CD4-positive, alpha-beta memory T cell (primary cell): ENCODE measurements at regions of chr22 and their contacts with region 1.

Region 1: DNA sequence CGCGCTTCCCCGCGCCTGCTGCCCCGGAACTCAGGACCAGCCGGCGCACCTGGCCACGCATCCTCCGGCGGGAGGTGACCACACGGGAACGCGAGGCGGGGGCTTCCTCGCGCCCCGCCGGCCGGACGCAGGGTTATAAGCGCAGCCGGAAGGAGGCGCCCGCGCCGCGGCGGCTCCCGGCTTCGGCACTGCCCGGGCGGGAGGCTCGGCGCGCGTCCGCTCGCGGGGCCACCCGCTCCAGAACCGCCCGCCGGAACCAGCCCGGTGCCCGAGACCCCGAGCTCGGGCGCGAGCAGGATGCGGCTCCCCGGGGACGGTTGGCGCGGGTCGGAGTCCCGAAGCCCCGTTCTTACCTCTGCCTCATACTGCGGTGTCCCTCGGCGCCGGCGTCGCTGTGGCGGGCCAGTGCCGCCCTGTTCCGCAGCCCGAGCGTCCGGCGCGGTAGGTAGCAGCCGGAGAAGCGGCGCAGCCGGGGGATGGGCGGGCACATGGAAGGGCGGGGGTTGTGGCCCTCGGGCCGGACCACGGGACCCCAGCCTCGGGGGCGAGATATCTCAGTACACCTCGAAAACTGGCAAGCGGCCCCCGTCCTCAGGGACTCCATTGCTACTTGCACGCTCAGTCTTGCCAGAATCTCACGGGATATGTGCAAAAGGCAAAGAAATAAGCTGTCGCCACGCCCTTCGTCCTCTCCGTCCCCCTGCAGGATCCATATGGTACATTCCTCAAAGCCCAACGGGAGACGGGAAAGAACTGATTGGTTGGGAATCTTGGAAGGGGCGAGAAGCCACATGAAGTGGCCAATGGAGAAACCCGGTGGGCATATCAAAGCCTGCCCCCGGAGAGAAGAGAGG is 23.1 kb downstream of the MICAL3 start:
- DNase-seq: peak; percentile 51 to 75 (median 73)
- H3K4me3 ChIP-seq: peak overlapping the region; percentile 53 to 73
- H3K4me3 Mint-ChIP-seq: peak overlapping the region; percentile 92 to 99 (median 96)
- H3K27ac ChIP-seq: peak overlapping the region; percentile 74
- H3K27ac Mint-ChIP-seq: peak overlapping the region; percentile 78 to 98 (median 95)
- H3K4me1 ChIP-seq: peaks cover 47% of the 10 kb centered on the region
- H3K4me1 Mint-ChIP-seq: peaks cover 25 to 58% (median 44%) of the 10 kb centered on the region in 4 donors
- H3K27me3 ChIP-seq: no peaks in the 10 kb centered on the region
- H3K27me3 Mint-ChIP-seq: no peaks in the 10 kb centered on the region

Region 2: DNA sequence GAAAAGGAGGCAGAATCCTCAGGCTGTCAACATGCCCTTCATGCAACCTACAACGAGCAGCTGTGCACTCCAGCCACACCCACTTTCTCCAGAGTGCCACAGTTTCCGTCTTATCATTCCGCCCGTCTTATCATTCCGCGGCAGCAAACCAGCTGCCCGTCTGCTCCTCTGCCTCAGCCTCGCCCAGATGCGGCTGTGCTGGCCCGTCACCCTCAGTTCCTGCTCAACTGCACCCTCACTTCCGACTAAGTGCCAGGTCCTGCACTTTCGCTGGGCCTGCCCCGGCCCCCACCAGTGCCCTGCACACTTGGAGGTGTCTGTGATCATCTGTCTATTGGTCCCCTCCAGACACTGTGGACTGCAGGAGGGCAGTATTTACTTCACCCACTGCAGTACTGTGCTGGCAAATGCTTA is 20.6 kb before region 1 on chr22:
- CTCF ChIA-PET with region 1: interaction called, 3 read pairs
- POLR2A ChIA-PET with region 1: interaction called, 5 read pairs
- intact Hi-C with region 1: loop called (anchors 2 kb)
- DNase-seq: peak; percentile 47 to 63 (median 52)
- H3K4me3 ChIP-seq: peak overlapping the region in 1 of 2 donors; percentile 13
- H3K4me3 Mint-ChIP-seq: peak overlapping the region; percentile 63 to 89 (median 78)
- H3K27ac ChIP-seq: peak overlapping the region; percentile 17
- H3K27ac Mint-ChIP-seq: peak overlapping the region; percentile 70 to 94 (median 88)
- H3K4me1 ChIP-seq: peaks cover 27% of the 10 kb centered on the region
- H3K4me1 Mint-ChIP-seq: peaks cover 22 to 47% (median 33%) of the 10 kb centered on the region in 4 donors
- H3K27me3 ChIP-seq: no peaks in the 10 kb centered on the region
- H3K27me3 Mint-ChIP-seq: no peaks in the 10 kb centered on the region

Region 3: GRCh38 chr22:18024276-18024947 is 23.1 kb after region 1 on chr22 and contains the start of gene MICAL3:
- CTCF ChIA-PET with region 1: interaction called, 11 read pairs
- POLR2A ChIA-PET with region 1: no interaction called
- intact Hi-C with region 1: no loop called
- DNase-seq: peak; percentile 46 to 68 (median 64)
- H3K4me3 ChIP-seq: peak within 1 kb of the TSS; percentile 40 to 61
- H3K4me3 Mint-ChIP-seq: peak within 1 kb of the TSS; percentile 88 to 97 (median 94)
- H3K27ac ChIP-seq: no peak within 1 kb of the TSS
- H3K27ac Mint-ChIP-seq: peak within 1 kb of the TSS in 3 of 7 donors; percentile 45 to 86 (median 51)
- H3K4me1 ChIP-seq: peaks cover 15% of the 10 kb centered on the region
- H3K4me1 Mint-ChIP-seq: peaks cover 5 to 19% (median 10%) of the 10 kb centered on the region in 4 donors
- H3K27me3 ChIP-seq: peaks cover 17% of the 10 kb centered on the region
- H3K27me3 Mint-ChIP-seq: peaks cover 22 to 28% of the 10 kb centered on the region in 2 donors
- total RNA-seq, gene MICAL3: 25.9 to 28.9 TPM